Dendritic cell treated with granulocyte-macrophage colony-stimulating factor and Interleukin-4, amounts not matched to agents 40 ng/mL and 50 ng/mL, for 4 days (primary cell): ENCODE measurements at regions of chr10 and their contacts with region 1.

Region 1: GRCh38 chr10:80429521-80429966 is 21.2 kb downstream of the PRXL2A start:
- H3K4me3 Mint-ChIP-seq: no peak overlapping the region
- H3K27ac Mint-ChIP-seq: peak overlapping the region; percentile 53
- H3K4me1 Mint-ChIP-seq: peaks cover 19% of the 10 kb centered on the region
- H3K27me3 Mint-ChIP-seq: no peaks in the 10 kb centered on the region

Region 2: DNA sequence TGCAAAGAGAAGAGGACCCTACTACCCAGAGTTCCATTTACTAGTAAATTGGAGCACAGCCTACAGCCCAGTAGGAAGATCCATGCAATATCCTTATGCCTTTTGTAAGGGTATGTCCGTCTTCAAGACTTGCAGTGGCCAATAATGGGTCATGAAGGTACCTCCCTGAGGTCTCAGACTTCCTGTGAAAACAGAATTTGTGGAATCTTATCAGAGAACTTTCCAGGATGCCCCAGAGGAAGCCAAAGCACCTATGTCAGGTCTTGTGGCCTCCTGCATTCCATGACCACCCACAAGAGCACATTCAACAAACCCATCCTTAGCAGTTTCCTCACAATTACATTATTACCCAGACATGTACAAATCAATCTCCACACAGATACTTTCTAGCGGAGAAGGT is 39.7 kb before region 1 on chr10:
- intact Hi-C with region 1: loop called (anchors 5 kb)
- H3K4me3 Mint-ChIP-seq: no peak overlapping the region
- H3K27ac Mint-ChIP-seq: peak overlapping the region; percentile 37
- H3K4me1 Mint-ChIP-seq: peaks cover 52% of the 10 kb centered on the region
- H3K27me3 Mint-ChIP-seq: no peaks in the 10 kb centered on the region